Activated T-helper 2 cell treated with anti-CD3 and anti-CD28 coated beads, Interferon-gamma antibody, Interleukin-2, Interleukin-4, amounts not matched to agents 10 μg/mL and 5 μg/mL and 100 μg/mL, durations not matched to agents 14 hours and 24 hours and 36 hours (primary cell): ENCODE measurements at regions of chr6 and their contacts with region 1.

Region 1: GRCh38 chr6:28136585-28137504 is 4.8 kb upstream of the ZKSCAN8 start:
- DNase-seq: peak; percentile 68
- H3K4me3 Mint-ChIP-seq: peak overlapping the region; percentile 98
- H3K27ac Mint-ChIP-seq: peak overlapping the region; percentile 98
- H3K4me1 Mint-ChIP-seq: peaks cover 59% of the 10 kb centered on the region
- H3K27me3 Mint-ChIP-seq: no peaks in the 10 kb centered on the region

Region 2: DNA sequence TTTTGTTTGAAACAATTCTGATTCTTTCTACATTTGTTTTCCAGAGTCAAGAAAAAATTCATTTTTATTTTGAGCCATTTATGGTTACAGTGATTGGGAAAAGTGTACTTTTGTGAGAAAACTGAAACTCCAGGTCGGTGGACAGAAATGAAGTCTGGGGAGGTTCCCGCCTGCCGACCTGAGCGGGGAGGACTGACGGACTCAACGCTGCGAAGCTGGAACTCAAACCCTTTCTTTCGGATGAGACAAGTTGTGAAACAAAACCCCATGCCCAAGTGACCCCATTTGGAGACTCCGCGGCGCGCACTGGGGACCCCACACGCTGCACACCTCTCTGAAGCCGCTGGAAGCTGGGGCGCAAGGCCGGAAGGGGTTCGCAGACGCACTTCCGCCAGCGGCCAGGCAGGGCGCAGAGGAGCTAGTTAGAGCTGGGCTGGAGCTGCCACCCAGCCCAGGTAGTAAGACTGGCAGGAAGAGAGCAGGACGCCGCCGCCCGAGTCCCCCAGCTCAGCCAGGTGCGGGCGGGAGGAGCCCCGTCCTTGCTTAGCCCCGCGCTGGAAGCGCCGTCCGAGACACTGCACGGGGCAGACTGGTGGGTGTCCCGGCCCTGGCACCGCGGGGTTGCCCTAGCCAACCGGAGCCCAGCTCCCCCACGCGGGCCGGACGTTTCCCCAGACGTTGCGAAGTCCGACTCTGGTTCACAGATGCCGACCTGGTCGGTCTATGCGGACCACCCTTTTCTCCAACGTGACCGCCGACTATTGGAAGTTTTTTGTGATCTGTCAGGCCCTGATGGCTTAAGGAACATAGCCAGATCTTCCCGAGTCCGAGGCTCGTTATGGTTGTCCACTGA is 32.2 kb before region 1 on chr6:
- intact Hi-C with region 1: loop called (anchors 2 kb)
- DNase-seq: peak; percentile 76
- H3K4me3 Mint-ChIP-seq: peak overlapping the region; percentile 83
- H3K27ac Mint-ChIP-seq: peak overlapping the region; percentile 66
- H3K4me1 Mint-ChIP-seq: peaks cover 11% of the 10 kb centered on the region
- H3K27me3 Mint-ChIP-seq: peaks cover 25% of the 10 kb centered on the region

Region 3: GRCh38 chr6:28200020-28200419 is 63.2 kb after region 1 on chr6:
- intact Hi-C with region 1: no loop called
- DNase-seq: no peak
- H3K4me3 Mint-ChIP-seq: no peak overlapping the region
- H3K27ac Mint-ChIP-seq: no peak overlapping the region
- H3K4me1 Mint-ChIP-seq: peaks cover 4% of the 10 kb centered on the region
- H3K27me3 Mint-ChIP-seq: peaks cover 13% of the 10 kb centered on the region

Region 4: DNA sequence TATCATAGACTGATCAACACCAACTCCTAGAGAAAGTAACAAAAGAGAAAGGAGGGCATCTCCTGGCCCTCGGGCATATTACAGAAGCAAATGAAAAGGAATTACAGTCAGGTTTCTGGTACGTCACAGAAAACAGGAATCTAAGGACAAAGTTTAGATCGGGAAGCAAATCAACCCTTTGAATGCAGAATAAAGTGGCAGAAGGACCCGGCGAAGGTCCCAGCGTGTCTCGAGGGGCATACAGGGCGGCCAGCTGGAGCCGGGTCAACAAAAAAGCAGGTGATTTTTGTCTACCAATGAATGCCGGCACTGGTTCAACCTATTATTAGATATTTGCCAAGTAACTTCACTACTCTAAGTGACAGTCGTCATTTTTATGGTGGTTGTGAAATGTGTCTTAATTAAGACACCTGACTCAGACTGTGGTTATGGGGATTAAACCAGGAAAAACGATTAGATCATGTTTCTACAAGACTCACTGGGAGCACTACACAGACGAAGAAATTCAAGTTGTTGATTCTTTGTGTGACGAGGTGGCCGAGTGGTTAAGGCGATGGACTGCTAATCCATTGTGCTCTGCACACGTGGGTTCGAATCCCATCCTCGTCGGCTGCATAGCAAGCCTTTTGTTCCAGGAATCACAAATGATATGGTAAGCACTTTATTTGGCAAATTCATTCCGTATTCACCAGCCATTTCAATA is 75.8 kb after region 1 on chr6:
- intact Hi-C with region 1: loop called (anchors 5 kb)
- DNase-seq: peak; percentile 34
- H3K4me3 Mint-ChIP-seq: peak overlapping the region; percentile 76
- H3K27ac Mint-ChIP-seq: peak overlapping the region; percentile 47
- H3K4me1 Mint-ChIP-seq: peaks cover 30% of the 10 kb centered on the region
- H3K27me3 Mint-ChIP-seq: peaks cover 80% of the 10 kb centered on the region

Region 5: GRCh38 chr6:28235912-28236452 is 99.1 kb after region 1 on chr6:
- intact Hi-C with region 1: no loop called
- DNase-seq: no peak
- H3K4me3 Mint-ChIP-seq: no peak overlapping the region
- H3K27ac Mint-ChIP-seq: no peak overlapping the region
- H3K4me1 Mint-ChIP-seq: no peaks in the 10 kb centered on the region
- H3K27me3 Mint-ChIP-seq: no peaks in the 10 kb centered on the region

Region 6: DNA sequence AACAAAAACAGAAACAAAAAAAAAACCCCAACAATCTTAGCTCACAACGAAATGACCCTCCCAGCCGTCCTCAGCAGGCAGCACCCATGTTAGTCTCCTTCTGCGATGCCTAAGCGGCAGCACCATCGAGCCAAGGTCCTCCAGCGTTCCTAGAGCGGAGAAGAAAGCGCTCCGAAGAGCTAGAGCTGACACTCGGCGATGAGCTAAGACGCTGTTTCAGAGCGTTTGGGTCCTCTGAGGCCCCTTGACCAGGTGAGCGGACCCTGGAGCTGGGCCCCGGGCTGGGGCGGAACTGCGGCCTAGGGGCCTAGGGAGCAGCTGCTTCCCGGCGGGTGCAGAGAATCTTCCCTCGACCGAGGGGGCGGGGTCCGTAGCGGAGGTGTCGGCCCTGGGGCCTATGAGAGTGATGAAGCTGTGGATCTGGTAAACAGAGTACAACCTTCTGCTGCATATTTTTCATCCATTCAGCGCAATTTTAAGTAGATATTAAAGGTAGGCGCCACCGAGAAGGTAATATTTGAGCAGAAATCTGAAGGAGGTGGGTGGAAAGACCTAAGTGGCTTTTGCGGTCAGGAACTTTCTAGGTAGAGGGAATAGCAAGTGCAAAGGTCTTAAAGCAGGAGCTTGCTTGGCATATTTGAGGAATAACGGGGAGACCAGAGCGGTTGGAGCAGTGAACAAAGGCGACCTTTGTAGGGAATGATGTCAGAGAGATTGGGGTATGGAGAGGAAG is 130.3 kb after region 1 on chr6 and contains the start of gene ZSCAN26:
- intact Hi-C with region 1: loop called (anchors 5 kb)
- DNase-seq: peak; percentile 79
- H3K4me3 Mint-ChIP-seq: no peak within 1 kb of the TSS
- H3K27ac Mint-ChIP-seq: no peak within 1 kb of the TSS
- H3K4me1 Mint-ChIP-seq: peaks cover 28% of the 10 kb centered on the region
- H3K27me3 Mint-ChIP-seq: peaks cover 10% of the 10 kb centered on the region
- total RNA-seq, gene ZSCAN26: 6.1 and 7.7 TPM in 2 replicates

Region 7: DNA sequence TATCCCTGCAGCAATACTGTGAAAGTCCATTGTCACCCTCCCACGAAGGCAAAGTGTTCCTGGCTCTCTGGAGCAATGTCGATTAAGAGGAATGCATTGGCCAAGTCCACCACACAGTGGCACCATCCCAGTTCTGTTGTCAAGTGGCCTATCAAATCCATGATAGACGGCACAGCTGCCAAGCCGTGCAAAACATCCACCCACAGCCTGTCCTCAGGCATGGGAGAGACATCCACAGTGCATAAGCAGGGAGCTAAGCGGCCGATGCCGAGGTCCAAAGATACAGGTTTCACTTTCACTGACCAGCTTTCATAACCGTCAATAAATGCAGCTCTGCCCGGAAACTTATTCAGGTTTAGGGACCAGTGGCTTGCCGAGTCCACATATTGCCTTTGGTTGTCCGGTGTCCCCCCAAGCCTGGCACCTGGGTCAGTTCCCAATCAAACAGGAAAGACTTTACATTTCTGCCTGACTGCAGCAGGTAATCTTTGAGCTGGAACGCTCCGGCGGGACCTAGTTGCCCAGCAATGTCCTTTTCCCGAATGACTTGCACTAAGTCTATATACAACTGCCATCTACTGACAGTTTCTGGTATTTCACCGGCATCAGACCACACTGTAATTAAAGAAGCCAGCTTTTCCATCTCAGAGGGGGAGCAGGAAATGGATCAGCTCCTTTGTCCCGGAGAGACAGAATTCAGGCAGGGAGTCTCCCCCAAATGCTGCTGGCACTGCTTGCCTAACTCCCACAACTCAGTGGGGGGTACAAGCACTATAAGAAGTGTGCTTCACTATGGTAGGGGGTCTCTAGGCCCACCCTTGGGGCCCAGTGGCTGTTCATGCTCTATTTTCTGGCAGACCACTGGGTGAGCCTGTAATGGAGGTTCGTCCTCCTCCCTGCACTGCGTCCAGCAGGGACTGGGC is 219.2 kb after region 1 on chr6:
- intact Hi-C with region 1: loop called (anchors 1 kb)
- DNase-seq: peak; percentile 41
- H3K4me3 Mint-ChIP-seq: peak overlapping the region; percentile 86
- H3K27ac Mint-ChIP-seq: peak overlapping the region; percentile 72
- H3K4me1 Mint-ChIP-seq: peaks cover 17% of the 10 kb centered on the region
- H3K27me3 Mint-ChIP-seq: no peaks in the 10 kb centered on the region

Region 8: DNA sequence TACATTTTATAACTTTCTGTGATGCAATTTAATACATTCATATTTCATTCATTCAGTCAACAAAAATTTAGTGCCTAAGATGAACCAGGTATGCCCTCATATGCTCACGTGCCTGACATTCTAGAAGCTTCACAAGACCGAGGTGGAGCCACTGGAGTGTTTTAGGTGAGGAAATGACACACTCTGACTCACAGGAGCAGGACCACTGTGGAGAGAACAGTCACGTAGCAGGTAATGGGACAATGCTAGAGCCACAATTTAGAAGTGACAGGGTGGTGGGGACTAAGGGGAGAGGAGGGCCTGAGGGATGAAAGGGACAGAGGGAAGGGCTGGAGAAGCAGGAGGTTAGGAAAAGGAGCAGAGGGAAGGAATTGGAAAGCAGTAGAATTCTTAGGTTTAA is 1787.9 kb after region 1 on chr6:
- intact Hi-C with region 1: no loop called
- DNase-seq: no peak
- H3K4me3 Mint-ChIP-seq: peak overlapping the region; percentile 79
- H3K27ac Mint-ChIP-seq: peak overlapping the region; percentile 80
- H3K4me1 Mint-ChIP-seq: peaks cover 23% of the 10 kb centered on the region
- H3K27me3 Mint-ChIP-seq: peaks cover 13% of the 10 kb centered on the region